ENCODE measurements at regions of chr2 and their contacts with region 1.

Region 1: DNA sequence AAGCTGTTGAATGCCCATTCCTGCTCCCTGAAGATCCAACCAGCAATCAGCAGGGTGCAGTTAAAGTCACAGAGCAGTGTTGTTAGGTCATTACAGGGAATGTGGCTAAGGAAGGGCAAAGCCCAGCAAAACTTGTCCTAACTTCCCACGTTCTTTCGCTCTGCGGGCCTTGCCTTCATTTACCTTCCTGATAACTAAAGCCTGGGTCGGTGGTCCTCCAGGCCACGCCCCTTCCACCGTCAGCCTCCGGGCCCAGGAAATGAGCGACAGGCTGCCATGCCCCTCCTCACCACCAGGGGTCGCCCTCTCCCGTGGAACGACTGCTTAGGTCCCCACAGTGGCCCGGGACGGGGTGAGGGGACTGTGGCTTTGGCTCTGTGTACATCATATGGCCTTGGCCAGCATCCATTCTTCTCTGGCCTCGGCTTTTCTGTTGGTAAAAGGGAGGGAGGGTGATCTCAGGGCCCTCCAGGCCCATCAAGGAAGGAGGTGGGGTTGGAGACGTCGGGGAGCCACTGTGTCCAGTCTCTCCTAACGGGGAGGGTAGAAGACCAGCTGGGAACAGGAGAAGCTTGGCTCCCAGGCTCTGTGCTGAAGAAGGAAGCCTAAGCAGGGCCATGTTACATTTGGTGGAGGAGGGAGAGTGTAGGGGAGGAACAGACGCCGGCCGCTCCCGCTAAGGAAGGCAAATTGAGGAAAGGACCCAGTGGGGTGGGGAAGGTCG is 2.2 kb downstream of the SH2D6 start:
- DNase-seq: peak; percentile 88 to 91
- H3K4me3 ChIP-seq: no peak overlapping the region
- H3K27ac ChIP-seq: peak overlapping the region; percentile 97 to 98 (median 98)
- H3K4me1 ChIP-seq: peaks cover 46 to 56% of the 10 kb centered on the region in 2 donors
- H3K27me3 ChIP-seq: no peaks in the 10 kb centered on the region
- CTCF ChIP-seq: peak; percentile 99 to 100 (median 100)
- POLR2A ChIP-seq: no peak

Region 2: GRCh38 chr2:85354286-85355072 is 66.2 kb before region 1 on chr2 and contains the starts of genes ELMOD3 and RETSAT:
- intact Hi-C with region 1: loop called (anchors 10 kb)
- DNase-seq: peak; percentile 98
- H3K4me3 ChIP-seq: peak within 1 kb of the TSS; percentile 65 to 96 (median 91)
- H3K27ac ChIP-seq: peak within 1 kb of the TSS; percentile 77 to 89 (median 80)
- H3K4me1 ChIP-seq: peaks cover 13 to 35% of the 10 kb centered on the region in 2 donors
- H3K27me3 ChIP-seq: no peaks in the 10 kb centered on the region
- CTCF ChIP-seq: peak in 1 of 6 experiments; percentile 15
- POLR2A ChIP-seq: peak; percentile 80 to 96
- total RNA-seq, gene ELMOD3: 23.4 to 34.5 (median 31.4) TPM
- total RNA-seq, gene RETSAT: 88.2 to 253 (median 182) TPM

Region 3: DNA sequence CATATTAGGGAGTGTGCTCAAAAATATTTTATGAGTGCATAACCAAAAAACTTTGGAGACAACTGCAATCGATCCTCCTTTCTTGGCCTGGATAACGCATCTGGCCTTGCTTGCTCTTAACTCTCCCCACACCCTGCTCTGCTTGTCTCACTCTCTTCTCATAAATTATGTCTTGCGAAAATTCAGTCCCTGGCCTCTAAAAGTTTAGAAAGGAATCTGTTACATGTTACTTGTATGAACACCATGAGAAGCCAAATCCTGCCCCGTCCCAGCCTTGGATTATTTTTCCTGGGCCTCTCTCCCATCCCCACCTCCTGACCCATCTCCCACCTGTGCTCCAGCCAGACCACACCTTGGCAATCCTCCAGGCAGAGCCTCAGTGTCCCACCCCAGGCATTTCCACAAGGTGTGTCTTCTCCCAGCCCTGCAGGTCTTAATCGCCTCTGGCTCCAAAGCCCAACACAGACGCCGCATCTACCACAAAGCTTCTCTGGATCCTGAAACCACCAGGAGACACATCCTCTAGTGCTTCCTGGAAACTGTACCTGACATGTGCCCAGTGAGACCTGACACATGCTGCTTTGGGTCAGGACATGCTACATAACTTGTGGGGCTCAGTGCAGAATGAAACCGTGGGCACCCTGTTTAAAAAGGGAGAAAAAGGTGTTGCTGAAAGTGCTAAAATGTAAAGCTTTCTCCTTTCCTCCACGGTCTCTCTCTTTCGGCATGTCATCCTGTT is 567.6 kb after region 1 on chr2:
- intact Hi-C with region 1: no loop called
- DNase-seq: no peak
- H3K4me3 ChIP-seq: no peak overlapping the region
- H3K27ac ChIP-seq: no peak overlapping the region
- H3K4me1 ChIP-seq: peaks cover 1 to 5% of the 10 kb centered on the region in 2 donors
- H3K27me3 ChIP-seq: no peaks in the 10 kb centered on the region
- CTCF ChIP-seq: no peak
- POLR2A ChIP-seq: no peak